Prostate gland (tissue), 2 donors: ENCODE measurements at regions of chrX and their contacts with region 1.

Region 1: GRCh38 chrX:51336584-51336983 is 4.0 kb downstream of the NUDT10 start:
- DNase-seq: peak; percentile 10
- H3K4me3 ChIP-seq: no peak overlapping the region
- H3K27ac ChIP-seq: no peak overlapping the region
- H3K4me1 ChIP-seq: no peaks in the 10 kb centered on the region
- H3K27me3 ChIP-seq: no peaks in the 10 kb centered on the region
- CTCF ChIP-seq: peak in 3 of 4 experiments; percentile 41 to 52 (median 45)
- POLR2A ChIP-seq: no peak

Region 2: GRCh38 chrX:51420610-51421009 is 84.0 kb after region 1 on chrX:
- intact Hi-C with region 1: loop called (anchors 5 kb)
- DNase-seq: peak; percentile 17
- H3K4me3 ChIP-seq: no peak overlapping the region
- H3K27ac ChIP-seq: no peak overlapping the region
- H3K4me1 ChIP-seq: no peaks in the 10 kb centered on the region
- H3K27me3 ChIP-seq: no peaks in the 10 kb centered on the region
- CTCF ChIP-seq: peak; percentile 11 to 60 (median 45)
- POLR2A ChIP-seq: no peak